Heart left ventricle (tissue), 16 donors: ENCODE measurements at regions of chr20 and their contacts with region 1.

Region 1: DNA sequence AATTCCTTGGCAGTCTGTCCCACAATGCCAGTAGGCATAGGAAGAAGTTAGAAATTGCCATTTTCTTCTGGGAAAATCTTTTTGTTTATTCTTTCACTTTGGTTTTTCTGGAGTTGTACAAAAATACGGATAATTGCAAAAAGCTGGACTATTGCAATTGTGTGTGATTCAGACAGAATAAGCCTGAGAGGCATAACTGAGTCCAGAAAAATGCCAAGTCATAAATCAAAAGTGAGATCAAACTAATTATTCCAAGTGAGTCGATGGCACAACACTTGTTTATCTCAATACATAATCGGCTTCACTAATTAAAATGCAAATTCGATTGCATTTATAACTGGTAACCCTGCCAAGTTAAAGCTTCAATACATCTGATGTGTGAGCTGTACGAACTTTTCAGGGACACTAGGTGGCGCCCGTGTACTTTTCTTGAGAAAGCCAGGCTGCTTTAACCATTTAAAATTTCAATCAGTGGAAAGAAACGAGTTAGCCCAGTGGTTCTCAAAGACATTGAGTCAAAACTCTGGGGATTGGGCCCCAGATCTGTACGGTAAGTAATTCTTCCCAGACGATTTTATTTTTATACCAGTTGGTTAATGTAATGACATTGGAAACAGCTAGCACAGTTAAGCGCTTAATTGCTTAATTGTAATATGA is 102.6 kb downstream of the LAMP5 start:
- DNase-seq: peak in 4 of 5 donors; percentile 29 to 54 (median 42)
- ATAC-seq: peak in 2 of 4 donors; percentile 62 to 73
- H3K4me3 ChIP-seq: no peak overlapping the region
- H3K27ac ChIP-seq: no peak overlapping the region
- H3K4me1 ChIP-seq: peaks cover 0 to 5% (median 0%) of the 10 kb centered on the region in 12 donors
- H3K27me3 ChIP-seq: peaks cover 0 to 20% (median 3%) of the 10 kb centered on the region in 9 donors
- CTCF ChIP-seq: peak; percentile 72 to 90 (median 84)
- POLR2A ChIP-seq: no peak

Region 2: DNA sequence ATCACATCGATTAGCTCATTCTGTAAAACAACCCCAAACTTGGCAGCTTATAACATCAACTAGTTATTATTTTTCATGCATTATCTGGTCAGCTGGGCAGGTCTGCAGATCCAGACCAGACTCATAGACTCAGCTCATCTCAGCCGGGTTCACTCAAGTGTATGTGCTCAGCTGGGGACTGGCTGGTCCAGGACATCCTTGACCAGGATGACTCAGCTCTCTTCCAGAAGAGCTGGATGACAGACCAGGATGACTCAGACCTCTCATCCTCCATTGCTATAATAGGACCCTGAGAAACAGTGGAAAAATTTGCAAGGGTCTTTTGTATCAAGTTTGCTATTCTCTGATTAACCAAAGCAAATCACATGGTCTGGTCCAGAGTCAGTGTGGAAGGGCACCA is 860.6 kb before region 1 on chr20:
- intact Hi-C with region 1: loop called in 2 of 10 experiments (anchors 10 kb)
- DNase-seq: peak in 1 of 5 donors; percentile 50
- ATAC-seq: peak in 2 of 4 donors; percentile 86 to 90
- H3K4me3 ChIP-seq: no peak overlapping the region
- H3K27ac ChIP-seq: no peak overlapping the region
- H3K4me1 ChIP-seq: peaks cover 0 to 16% (median 0%) of the 10 kb centered on the region in 12 donors
- H3K27me3 ChIP-seq: no peaks in the 10 kb centered on the region
- CTCF ChIP-seq: no peak
- POLR2A ChIP-seq: no peak

Region 3: GRCh38 chr20:9565910-9566550 is 50.9 kb before region 1 on chr20:
- intact Hi-C with region 1: no loop called
- DNase-seq: no peak
- ATAC-seq: no peak
- H3K4me3 ChIP-seq: no peak overlapping the region
- H3K27ac ChIP-seq: no peak overlapping the region
- H3K4me1 ChIP-seq: no peaks in the 10 kb centered on the region
- H3K27me3 ChIP-seq: peaks cover 0 to 16% (median 0%) of the 10 kb centered on the region in 9 donors
- CTCF ChIP-seq: no peak
- POLR2A ChIP-seq: no peak

Region 4: GRCh38 chr20:9912858-9913434 is 296.0 kb after region 1 on chr20:
- intact Hi-C with region 1: loop called (anchors 2 to 10 kb)
- DNase-seq: peak in 2 of 5 donors; percentile 19 to 23
- ATAC-seq: no peak
- H3K4me3 ChIP-seq: no peak overlapping the region
- H3K27ac ChIP-seq: no peak overlapping the region
- H3K4me1 ChIP-seq: no peaks in the 10 kb centered on the region
- H3K27me3 ChIP-seq: peaks cover 0 to 21% (median 0%) of the 10 kb centered on the region in 9 donors
- CTCF ChIP-seq: peak; percentile 67 to 91 (median 78)
- POLR2A ChIP-seq: no peak

Region 5: DNA sequence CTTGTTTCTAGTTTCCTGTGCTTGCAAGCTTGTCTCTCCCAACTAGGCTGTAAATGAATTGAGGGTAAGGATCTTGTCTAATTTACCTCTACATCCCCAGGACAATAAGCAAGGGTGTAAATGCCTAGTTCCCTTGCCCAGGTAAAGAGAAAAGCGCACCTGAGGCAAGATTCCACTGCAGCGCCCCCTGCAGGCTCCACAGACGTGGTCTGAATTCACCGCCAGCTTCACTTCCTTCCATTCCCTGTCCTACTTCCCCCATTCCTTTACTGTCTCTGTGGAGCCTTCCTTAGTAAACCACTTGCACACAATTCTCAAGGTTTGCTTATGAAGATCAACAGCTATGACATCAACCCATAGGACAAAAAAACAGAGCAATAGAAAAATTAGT is 460.1 kb after region 1 on chr20:
- intact Hi-C with region 1: loop called in 1 of 10 experiments (anchors 10 kb)
- DNase-seq: no peak
- ATAC-seq: no peak
- H3K4me3 ChIP-seq: no peak overlapping the region
- H3K27ac ChIP-seq: peak overlapping the region in 8 of 12 donors; percentile 8 to 76 (median 58)
- H3K4me1 ChIP-seq: peaks cover 0 to 22% (median 3%) of the 10 kb centered on the region in 12 donors
- H3K27me3 ChIP-seq: peaks cover 0 to 6% (median 0%) of the 10 kb centered on the region in 9 donors
- CTCF ChIP-seq: peak in 7 of 12 donors; percentile 2 to 32 (median 16)
- POLR2A ChIP-seq: no peak

Region 6: DNA sequence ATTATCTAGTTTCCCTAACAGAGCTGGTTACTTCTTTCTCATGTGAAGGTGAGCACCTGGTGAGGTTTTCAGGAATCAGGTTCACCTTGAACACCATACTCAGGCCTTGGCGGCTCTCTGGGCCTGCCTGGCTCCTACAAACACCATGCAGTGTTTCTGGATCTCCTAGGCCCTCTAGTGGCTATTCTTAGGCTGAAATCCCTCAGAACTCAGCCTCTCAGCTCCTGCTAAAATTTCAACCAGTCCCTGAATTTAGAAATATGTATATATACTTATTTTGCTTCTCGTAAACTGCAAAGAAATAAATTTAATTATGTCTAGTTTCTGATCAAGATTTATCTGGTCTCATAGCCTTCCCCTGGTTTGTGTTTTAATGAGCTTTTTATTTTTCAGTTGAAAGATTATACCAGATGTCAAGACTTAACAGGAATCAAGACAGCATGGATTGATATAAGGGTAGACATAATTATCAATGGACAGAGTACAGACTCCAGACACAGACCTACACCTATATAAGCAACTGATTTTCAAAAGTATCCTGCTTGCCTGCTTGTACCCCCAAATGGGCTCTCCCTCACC is 473.7 kb after region 1 on chr20:
- intact Hi-C with region 1: loop called in 5 of 10 experiments (anchors 5 to 10 kb)
- DNase-seq: peak; percentile 22 to 49 (median 31)
- ATAC-seq: peak in 3 of 4 donors; percentile 69 to 81 (median 80)
- H3K4me3 ChIP-seq: no peak overlapping the region
- H3K27ac ChIP-seq: no peak overlapping the region
- H3K4me1 ChIP-seq: no peaks in the 10 kb centered on the region
- H3K27me3 ChIP-seq: no peaks in the 10 kb centered on the region
- CTCF ChIP-seq: peak; percentile 56 to 85 (median 72)
- POLR2A ChIP-seq: no peak

Region 7: DNA sequence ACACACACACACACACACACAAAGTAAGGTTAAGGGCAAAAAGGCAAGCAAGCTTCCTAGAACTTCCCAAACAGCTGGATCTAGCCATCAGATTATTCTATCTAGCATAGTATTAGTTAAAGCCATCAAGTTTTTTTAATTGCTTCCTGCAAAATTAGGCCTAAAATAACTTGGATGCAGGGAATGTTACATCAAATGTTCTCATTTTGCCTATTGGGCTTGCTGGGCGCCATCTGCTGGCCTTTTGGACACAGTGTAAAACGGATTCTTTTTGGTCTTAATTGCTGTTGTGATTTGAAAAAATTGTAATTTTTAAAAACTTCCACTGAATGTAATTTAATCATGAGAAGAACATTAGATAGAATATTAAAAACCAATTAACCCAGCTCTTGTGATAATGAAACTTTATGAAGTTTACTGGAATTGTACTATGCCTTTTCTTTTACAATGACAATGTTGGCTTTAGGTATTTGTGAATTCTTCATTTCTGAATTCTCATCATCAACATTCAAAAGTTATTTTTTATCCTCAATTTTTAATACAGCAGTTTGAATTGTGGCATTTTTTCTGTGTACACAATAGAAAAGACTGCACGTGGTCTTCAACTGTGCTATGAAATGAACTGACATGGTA is 810.2 kb after region 1 on chr20:
- intact Hi-C with region 1: loop called in 2 of 10 experiments (anchors 5 to 10 kb)
- DNase-seq: peak in 4 of 5 donors; percentile 28 to 69 (median 52)
- ATAC-seq: peak in 1 of 4 donors; percentile 64
- H3K4me3 ChIP-seq: no peak overlapping the region
- H3K27ac ChIP-seq: no peak overlapping the region
- H3K4me1 ChIP-seq: peaks cover 5 to 60% (median 29%) of the 10 kb centered on the region in 12 donors
- H3K27me3 ChIP-seq: no peaks in the 10 kb centered on the region
- CTCF ChIP-seq: peak; percentile 64 to 87 (median 75)
- POLR2A ChIP-seq: no peak

Region 8: DNA sequence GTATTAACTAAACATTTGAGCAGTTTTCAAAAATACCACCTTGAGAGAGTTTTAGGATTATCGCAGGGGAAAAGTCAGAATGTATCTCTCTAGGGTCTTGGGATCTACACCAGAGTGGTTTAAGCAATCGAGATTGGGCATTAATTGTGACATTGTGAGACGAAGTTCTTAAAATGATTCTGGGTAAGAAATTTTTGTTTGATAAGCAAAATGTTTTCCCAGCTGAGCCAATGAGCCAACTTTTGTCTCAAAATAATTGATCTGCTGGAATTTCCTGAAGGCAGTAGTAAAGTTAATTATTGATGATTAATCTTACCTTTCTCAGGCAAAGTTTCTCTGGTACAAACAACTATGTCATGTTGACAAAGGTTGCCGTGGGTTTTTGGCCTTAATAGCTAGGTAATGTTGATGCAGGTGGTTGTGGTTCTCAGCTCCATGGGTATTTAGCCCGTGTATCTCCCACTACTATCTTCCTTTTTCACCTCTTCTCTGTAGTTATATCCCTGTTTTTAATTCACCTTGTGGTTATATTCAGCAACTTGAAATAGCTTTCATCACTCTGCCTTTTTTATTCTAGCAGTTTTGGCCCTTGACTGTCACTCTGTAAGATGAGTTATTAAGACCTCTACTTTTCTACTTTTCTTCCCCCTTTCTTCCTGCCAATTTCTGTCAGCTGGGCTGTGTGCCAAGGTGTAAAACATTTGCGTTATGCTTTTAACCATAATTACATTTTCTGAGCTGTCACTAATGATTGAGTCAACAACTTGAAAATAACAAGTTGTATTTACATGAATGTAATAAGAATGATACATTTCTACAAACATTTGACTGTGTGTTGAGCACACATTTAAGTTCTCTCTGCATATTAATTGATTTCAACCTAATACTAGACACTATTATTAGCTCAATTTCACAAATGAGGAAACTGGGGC is 1932.5 kb after region 1 on chr20:
- intact Hi-C with region 1: loop called in 9 of 10 experiments (anchors 2 to 10 kb)
- DNase-seq: no peak
- ATAC-seq: no peak
- H3K4me3 ChIP-seq: no peak overlapping the region
- H3K27ac ChIP-seq: no peak overlapping the region
- H3K4me1 ChIP-seq: peaks cover 0 to under 1% (median 0%) of the 10 kb centered on the region in 12 donors
- H3K27me3 ChIP-seq: peaks cover 0 to 4% (median 0%) of the 10 kb centered on the region in 9 donors
- CTCF ChIP-seq: no peak
- POLR2A ChIP-seq: no peak